Lower leg skin (tissue), 4 donors: ENCODE measurements at regions of chr11 and their contacts with region 1.

Region 1: GRCh38 chr11:11760838-11761237 is 80.9 kb upstream of the USP47 start:
- DNase-seq: no peak
- H3K4me3 ChIP-seq: no peak overlapping the region
- CTCF ChIP-seq: no peak
- POLR2A ChIP-seq: no peak

Region 2: DNA sequence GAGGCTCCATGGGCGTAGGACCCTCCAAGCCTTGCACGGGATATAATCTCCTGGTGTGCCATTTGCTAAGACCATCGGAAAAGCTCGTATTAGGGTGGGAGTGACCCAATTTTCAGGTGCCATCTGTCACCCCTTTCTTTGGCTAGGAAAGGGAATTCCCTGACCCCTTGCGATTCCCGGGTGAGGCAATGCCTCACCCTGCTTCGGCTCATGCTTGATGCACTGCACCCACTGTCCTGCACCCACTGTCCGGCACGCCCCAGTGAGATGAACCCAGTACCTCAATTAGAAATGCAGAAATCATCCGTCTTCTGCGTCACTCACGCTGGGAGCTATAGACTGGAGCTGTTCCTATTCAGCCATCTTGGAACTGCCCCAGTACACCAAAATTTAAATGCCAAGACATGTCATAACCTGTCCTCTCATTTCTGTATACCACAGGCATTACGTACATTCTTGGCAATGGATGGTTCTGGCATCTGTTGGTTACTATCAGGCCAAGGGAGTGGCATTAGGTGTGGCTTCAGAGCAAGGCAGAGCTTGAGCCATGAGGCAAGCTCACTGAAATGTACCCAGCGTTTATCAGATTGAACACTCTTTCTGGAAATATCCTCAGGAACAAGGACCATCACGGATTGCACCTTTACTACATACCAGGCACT is 43.6 kb before region 1 on chr11:
- intact Hi-C with region 1: loop called (anchors 2 kb)
- DNase-seq: peak in 1 of 2 donors; percentile 89
- H3K4me3 ChIP-seq: no peak overlapping the region
- CTCF ChIP-seq: no peak
- POLR2A ChIP-seq: no peak

Region 3: DNA sequence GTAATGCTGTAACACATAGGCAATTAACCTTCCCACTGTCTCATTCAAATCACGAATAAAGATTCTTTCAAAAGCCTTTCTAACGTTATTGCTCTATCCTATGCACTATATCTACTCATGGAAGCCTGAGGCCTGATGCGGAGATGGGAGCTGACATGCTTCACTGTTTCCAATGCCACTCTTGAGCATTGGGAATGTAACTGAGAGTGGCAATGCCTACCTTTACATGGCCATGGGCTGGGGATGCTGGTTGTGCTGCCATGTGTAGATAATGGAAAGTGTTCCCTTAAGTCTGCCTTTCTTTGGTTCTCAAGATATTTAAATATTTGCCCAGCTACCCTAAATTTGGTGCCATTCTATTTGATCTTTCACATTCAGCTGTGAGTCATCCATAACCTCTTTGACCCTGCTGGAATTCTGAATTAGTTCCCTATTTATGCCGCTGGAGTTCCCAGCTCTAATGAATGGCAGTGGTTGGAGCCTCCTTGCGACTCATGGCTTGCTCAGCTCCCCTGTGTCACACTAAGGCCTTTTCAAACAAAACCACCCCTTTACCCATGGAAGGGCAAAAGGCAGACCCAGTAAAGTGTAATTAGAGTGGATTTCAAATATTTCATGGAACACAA is 269.0 kb after region 1 on chr11:
- intact Hi-C with region 1: no loop called
- DNase-seq: no peak
- H3K4me3 ChIP-seq: no peak overlapping the region
- CTCF ChIP-seq: no peak
- POLR2A ChIP-seq: no peak